Gastrocnemius medialis (tissue), 4 donors: ENCODE measurements at regions of chr4 and their contacts with region 1.

Region 1: GRCh38 chr4:76198411-76199237 is 15.0 kb downstream of the SCARB2 start:
- DNase-seq: peak; percentile 74 to 77
- ATAC-seq: peak; percentile 41
- H3K4me3 ChIP-seq: peak overlapping the region in 3 of 4 donors; percentile 9 to 39 (median 15)
- H3K27ac ChIP-seq: peak overlapping the region; percentile 90 to 97 (median 96)
- H3K4me1 ChIP-seq: peaks cover 94 to 97% of the 10 kb centered on the region in 2 donors
- H3K27me3 ChIP-seq: no peaks in the 10 kb centered on the region
- CTCF ChIP-seq: no peak
- POLR2A ChIP-seq: no peak

Region 2: DNA sequence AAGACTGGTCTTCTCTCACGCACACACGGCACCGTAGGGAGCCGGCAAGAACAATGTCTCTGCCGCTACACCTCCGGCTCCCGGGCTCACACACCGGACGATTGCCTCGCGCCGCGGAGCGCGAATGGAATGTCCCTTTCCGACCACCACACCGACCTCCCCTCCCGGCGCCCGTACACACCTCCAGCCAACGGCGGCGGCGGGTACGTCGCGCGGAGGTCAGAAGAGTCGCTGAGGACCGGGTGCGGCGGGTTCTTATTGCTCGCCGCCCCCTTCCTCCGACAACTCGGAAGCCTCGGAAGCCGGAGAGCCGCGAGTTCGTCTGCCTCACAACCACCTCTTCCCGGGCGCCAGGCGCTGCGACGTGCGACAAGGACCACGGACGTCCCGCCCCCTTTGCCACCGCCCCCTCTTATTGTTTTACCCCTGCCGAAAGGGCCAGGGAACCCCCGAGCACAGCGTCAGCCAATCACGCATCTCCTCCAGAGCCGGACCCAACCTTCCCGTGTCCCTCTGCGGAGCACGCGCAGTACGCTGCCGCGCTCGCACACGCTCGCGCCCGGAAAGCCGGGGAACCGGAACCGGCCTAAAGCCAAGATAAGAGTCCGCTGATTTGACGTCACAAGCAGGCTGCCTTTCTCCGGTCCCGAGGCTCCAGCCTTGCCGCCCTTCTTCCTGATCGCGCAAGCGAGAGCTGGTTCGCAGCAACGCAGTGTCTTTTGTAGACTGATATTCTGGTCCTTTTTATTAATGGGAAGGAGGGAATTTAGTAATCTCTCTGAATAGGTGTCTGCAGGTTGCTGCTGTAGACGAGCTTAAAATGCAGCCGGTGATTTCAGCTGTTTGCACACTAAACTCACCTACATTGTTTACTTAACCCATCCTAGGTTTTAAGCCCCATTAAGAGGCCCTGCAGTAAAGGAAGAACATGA is 525.3 kb before region 1 on chr4 and contains the start of gene G3BP2:
- in situ Hi-C with region 1: no loop called
- intact Hi-C with region 1: loop called (anchors 10 kb)
- DNase-seq: peak; percentile 98 to 99
- ATAC-seq: peak; percentile 92 to 94
- H3K4me3 ChIP-seq: peak within 1 kb of the TSS; percentile 80 to 98 (median 95)
- H3K27ac ChIP-seq: peak within 1 kb of the TSS; percentile 96 to 99 (median 98)
- H3K4me1 ChIP-seq: peaks cover 42 to 43% of the 10 kb centered on the region in 2 donors
- H3K27me3 ChIP-seq: no peaks in the 10 kb centered on the region
- CTCF ChIP-seq: peak in 1 of 5 experiments; percentile 31
- POLR2A ChIP-seq: peak; percentile 97
- total RNA-seq, gene G3BP2: 123 to 226 (median 132) TPM

Region 3: GRCh38 chr4:76213415-76214176 is 15.0 kb after region 1 on chr4 and contains the start of gene SCARB2:
- in situ Hi-C with region 1: no loop called
- intact Hi-C with region 1: loop called (anchors 2 kb)
- DNase-seq: peak; percentile 85 to 88
- ATAC-seq: peak; percentile 64 to 65
- H3K4me3 ChIP-seq: peak within 1 kb of the TSS; percentile 71 to 98 (median 86)
- H3K27ac ChIP-seq: peak within 1 kb of the TSS; percentile 90 to 97 (median 96)
- H3K4me1 ChIP-seq: peaks cover 81 to 82% of the 10 kb centered on the region in 2 donors
- H3K27me3 ChIP-seq: no peaks in the 10 kb centered on the region
- CTCF ChIP-seq: peak in 3 of 5 experiments; percentile 5 to 25 (median 21)
- POLR2A ChIP-seq: peak; percentile 96 to 98
- total RNA-seq, gene SCARB2: 91.3 to 292 (median 186) TPM

Region 4: GRCh38 chr4:76238236-76238635 is 39.6 kb after region 1 on chr4:
- in situ Hi-C with region 1: no loop called
- intact Hi-C with region 1: loop called (anchors 2 kb)
- DNase-seq: peak; percentile 80 to 92
- ATAC-seq: peak; percentile 97
- H3K4me3 ChIP-seq: peak overlapping the region in 2 of 4 donors; percentile 1 to 11
- H3K27ac ChIP-seq: peak overlapping the region; percentile 91 to 96 (median 94)
- H3K4me1 ChIP-seq: peaks cover 14 to 30% of the 10 kb centered on the region in 2 donors
- H3K27me3 ChIP-seq: no peaks in the 10 kb centered on the region
- CTCF ChIP-seq: no peak
- POLR2A ChIP-seq: peak; percentile 41 to 42

Region 5: GRCh38 chr4:76293772-76294171 is 95.1 kb after region 1 on chr4:
- in situ Hi-C with region 1: loop called in 1 of 4 experiments (anchors 10 kb)
- intact Hi-C with region 1: no loop called
- DNase-seq: no peak
- ATAC-seq: no peak
- H3K4me3 ChIP-seq: no peak overlapping the region
- H3K27ac ChIP-seq: no peak overlapping the region
- H3K4me1 ChIP-seq: peaks cover 0 to 12% of the 10 kb centered on the region in 2 donors
- H3K27me3 ChIP-seq: no peaks in the 10 kb centered on the region
- CTCF ChIP-seq: no peak
- POLR2A ChIP-seq: no peak

Region 6: GRCh38 chr4:76305971-76306881 is 107.6 kb after region 1 on chr4 and contains the start of gene STBD1:
- in situ Hi-C with region 1: loop called in 3 of 4 experiments (anchors 25 kb)
- intact Hi-C with region 1: loop called (anchors 5 kb)
- DNase-seq: peak; percentile 86 to 90
- ATAC-seq: peak; percentile 60 to 70
- H3K4me3 ChIP-seq: peak within 1 kb of the TSS; percentile 79 to 87 (median 86)
- H3K27ac ChIP-seq: peak within 1 kb of the TSS; percentile 93 to 98 (median 96)
- H3K4me1 ChIP-seq: peaks cover 68 to 69% of the 10 kb centered on the region in 2 donors
- H3K27me3 ChIP-seq: no peaks in the 10 kb centered on the region
- CTCF ChIP-seq: peak in 1 of 5 experiments; percentile 7
- POLR2A ChIP-seq: peak; percentile 81 to 88
- total RNA-seq, gene STBD1: 17.9 to 57.5 (median 41.5) TPM